ENCODE measurements at regions of chr4 and their contacts with region 1.

Region 1: DNA sequence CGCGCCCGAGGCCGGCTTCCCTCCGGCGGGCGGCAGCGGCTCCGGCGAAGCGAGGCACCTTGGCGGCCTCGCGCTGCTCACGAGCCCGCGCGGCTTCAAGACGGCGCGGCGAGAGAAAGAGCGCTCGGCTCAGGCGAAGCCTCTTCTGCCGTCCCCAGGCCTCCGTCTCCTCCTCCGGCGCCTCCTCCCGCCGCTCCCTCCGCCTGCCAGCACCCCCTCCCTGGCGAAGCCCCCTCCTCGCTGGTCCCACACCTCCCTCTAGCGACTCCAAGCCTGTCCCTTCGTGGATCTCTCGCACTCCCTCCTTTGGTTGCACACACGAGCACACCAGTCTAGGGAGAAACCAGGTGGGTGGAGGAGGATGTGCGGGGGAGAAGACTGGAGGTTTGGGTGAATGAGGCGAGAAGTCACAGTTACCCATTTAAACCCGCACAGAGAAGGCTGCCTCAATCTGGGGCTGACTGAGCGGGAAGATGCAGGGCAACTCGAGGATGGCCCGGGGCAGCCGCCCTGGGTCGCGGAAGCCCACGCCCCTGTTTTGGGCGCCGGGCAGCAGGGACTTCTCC is at the start of gene CAMK2D:
- DNase-seq: peak; percentile 76
- ATAC-seq: peak; percentile 36
- H3K4me3 Mint-ChIP-seq: peak within 1 kb of the TSS; percentile 99
- H3K27ac Mint-ChIP-seq: peak within 1 kb of the TSS; percentile 100
- H3K4me1 Mint-ChIP-seq: peaks cover 42% of the 10 kb centered on the region
- H3K27me3 Mint-ChIP-seq: no peaks in the 10 kb centered on the region
- CTCF ChIP-seq: no peak
- total RNA-seq, gene CAMK2D: 62.7 and 72.9 TPM in 2 replicates

Region 2: GRCh38 chr4:112231779-112232713 is 1529.7 kb before region 1 on chr4 and contains the start of gene AP1AR:
- CTCF ChIA-PET with region 1: no interaction called
- POLR2A ChIA-PET with region 1: no interaction called
- intact Hi-C with region 1: loop called (anchors 5 kb)
- DNase-seq: peak; percentile 91
- ATAC-seq: peak; percentile 73
- H3K4me3 Mint-ChIP-seq: peak within 1 kb of the TSS; percentile 100
- H3K27ac Mint-ChIP-seq: peak within 1 kb of the TSS; percentile 99
- H3K4me1 Mint-ChIP-seq: peaks cover 30% of the 10 kb centered on the region
- H3K27me3 Mint-ChIP-seq: peaks cover 1% of the 10 kb centered on the region
- CTCF ChIP-seq: no peak
- total RNA-seq, gene AP1AR: 20.1 and 24.3 TPM in 2 replicates

Region 3: DNA sequence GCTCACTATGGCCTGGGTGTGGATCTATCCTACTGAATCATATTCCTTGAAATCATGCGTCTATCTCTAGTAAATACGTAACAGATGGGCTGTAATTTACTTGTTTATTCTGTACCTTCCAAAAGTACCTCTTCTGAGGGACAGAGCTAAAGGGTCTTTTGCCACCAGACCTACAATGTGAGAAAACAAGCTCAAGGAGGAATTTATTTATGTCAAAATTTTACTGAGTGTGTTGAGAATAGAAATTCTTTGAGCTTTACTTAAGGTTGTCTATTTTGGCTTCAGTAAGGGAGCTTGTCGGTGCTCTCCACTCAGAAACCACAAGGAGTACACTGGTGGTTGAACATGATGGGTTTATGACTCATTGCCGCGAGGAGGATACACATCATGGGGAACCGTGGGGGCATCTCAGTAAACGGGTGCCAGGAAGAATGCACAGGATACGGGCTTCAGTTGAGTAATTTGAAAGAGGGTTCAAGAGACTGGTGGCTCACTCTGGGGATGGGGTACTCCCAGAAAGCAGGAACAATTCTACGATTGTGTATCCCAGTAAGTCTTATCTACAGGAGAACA is 709.2 kb before region 1 on chr4:
- CTCF ChIA-PET with region 1: no interaction called
- POLR2A ChIA-PET with region 1: no interaction called
- intact Hi-C with region 1: no loop called
- DNase-seq: no peak
- ATAC-seq: peak; percentile 21
- H3K4me3 Mint-ChIP-seq: no peak overlapping the region
- H3K27ac Mint-ChIP-seq: no peak overlapping the region
- H3K4me1 Mint-ChIP-seq: no peaks in the 10 kb centered on the region
- H3K27me3 Mint-ChIP-seq: peaks cover 2% of the 10 kb centered on the region
- CTCF ChIP-seq: no peak

Region 4: GRCh38 chr4:113394730-113395530 is 366.8 kb before region 1 on chr4:
- CTCF ChIA-PET with region 1: interaction called, 3 read pairs
- POLR2A ChIA-PET with region 1: no interaction called
- intact Hi-C with region 1: loop called (anchors 2 kb)
- DNase-seq: no peak
- ATAC-seq: peak; percentile 89
- H3K4me3 Mint-ChIP-seq: no peak overlapping the region
- H3K27ac Mint-ChIP-seq: no peak overlapping the region
- H3K4me1 Mint-ChIP-seq: no peaks in the 10 kb centered on the region
- H3K27me3 Mint-ChIP-seq: peaks cover 2% of the 10 kb centered on the region
- CTCF ChIP-seq: peak; percentile 24

Region 5: GRCh38 chr4:113618205-113618604 is 143.5 kb before region 1 on chr4:
- CTCF ChIA-PET with region 1: no interaction called
- POLR2A ChIA-PET with region 1: interaction called, 4 read pairs
- intact Hi-C with region 1: loop called (anchors 1 kb)
- DNase-seq: no peak
- ATAC-seq: peak; percentile 83
- H3K4me3 Mint-ChIP-seq: no peak overlapping the region
- H3K27ac Mint-ChIP-seq: no peak overlapping the region
- H3K4me1 Mint-ChIP-seq: peaks cover 48% of the 10 kb centered on the region
- H3K27me3 Mint-ChIP-seq: no peaks in the 10 kb centered on the region
- CTCF ChIP-seq: no peak

Region 6: DNA sequence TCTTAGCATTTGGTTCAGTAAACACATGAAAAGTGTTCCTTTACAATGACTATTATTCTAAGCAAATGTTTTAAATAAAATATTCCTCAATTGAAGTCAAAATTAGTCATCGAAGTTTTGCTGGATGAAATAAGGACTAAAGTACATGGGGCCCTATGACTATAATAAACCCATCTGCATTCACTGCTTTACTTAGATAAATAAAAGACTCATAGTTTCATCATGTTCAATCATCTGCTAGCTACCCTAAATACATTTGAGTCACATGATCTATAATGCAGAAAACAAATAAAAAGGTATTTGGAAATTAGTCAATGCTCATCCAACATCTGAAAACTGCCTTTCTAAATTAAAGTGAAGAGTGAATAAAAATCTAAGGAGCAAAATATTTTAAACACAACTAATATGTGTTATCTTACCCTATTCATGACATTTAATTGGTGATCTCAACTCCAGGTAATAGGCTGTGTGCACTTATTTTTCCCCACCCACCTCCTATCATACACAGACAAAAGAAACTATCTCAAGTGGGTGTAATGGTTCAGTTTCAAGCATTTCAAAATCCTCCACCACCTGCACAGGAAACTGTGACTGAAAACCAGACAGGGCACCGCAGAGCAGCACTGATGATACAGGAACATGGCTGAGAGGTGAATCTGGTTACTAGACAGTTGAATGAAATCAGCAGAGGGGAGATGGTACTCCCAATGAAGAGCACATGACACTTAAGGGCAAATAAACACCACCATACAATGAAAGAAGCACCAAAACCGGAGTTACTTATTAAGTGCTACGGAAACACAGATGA is 78.8 kb before region 1 on chr4:
- CTCF ChIA-PET with region 1: no interaction called
- POLR2A ChIA-PET with region 1: interaction called, 3 read pairs
- intact Hi-C with region 1: loop called (anchors 1 kb)
- DNase-seq: peak; percentile 33
- ATAC-seq: peak; percentile 93
- H3K4me3 Mint-ChIP-seq: peak overlapping the region; percentile 13
- H3K27ac Mint-ChIP-seq: peak overlapping the region; percentile 70
- H3K4me1 Mint-ChIP-seq: peaks cover 53% of the 10 kb centered on the region
- H3K27me3 Mint-ChIP-seq: no peaks in the 10 kb centered on the region
- CTCF ChIP-seq: no peak

Region 7: DNA sequence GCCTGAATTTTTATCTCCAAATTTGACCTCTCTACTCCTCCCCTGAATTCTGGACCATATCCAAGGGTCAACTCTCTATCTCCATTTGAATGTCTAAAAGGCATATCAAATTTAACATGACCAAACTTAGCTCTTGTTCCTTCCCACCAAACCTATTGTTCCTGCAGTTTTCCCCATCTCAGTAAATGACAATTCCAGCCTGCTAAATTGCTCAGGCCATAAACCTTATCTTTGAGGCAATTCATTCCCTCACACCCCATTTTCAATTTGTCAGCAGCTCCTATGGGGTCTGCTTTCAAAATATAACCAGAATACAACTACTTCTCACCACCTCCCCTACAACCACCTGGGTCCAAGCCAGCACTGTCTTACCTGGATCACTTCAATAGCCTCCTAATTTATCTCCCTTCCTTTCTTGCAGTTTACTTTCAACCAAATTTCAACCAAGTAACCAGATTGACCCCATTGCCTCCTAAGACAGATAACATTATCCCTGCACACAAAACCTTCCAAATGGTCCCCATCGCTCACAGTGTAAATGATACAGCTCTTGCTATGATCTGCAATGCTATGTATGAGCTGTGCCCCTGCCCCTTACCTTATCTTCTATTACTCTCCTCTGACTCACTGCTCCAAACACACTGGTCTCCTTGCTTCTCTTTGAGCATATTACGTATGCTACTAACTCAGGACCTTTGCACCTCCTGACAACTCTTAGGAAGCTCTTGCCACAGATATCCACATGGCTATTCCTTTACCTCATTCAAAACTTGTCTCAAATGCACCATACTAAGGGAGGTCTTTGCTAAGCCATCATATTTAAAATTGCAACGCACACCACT is 66.2 kb before region 1 on chr4:
- CTCF ChIA-PET with region 1: no interaction called
- POLR2A ChIA-PET with region 1: no interaction called
- intact Hi-C with region 1: no loop called
- DNase-seq: no peak
- ATAC-seq: no peak
- H3K4me3 Mint-ChIP-seq: no peak overlapping the region
- H3K27ac Mint-ChIP-seq: no peak overlapping the region
- H3K4me1 Mint-ChIP-seq: peaks cover 38% of the 10 kb centered on the region
- H3K27me3 Mint-ChIP-seq: no peaks in the 10 kb centered on the region
- CTCF ChIP-seq: no peak

Region 8: GRCh38 chr4:113869743-113870375 is 108.2 kb after region 1 on chr4:
- CTCF ChIA-PET with region 1: no interaction called
- POLR2A ChIA-PET with region 1: no interaction called
- intact Hi-C with region 1: loop called (anchors 1 kb)
- DNase-seq: peak; percentile 40
- ATAC-seq: peak; percentile 94
- H3K4me3 Mint-ChIP-seq: peak overlapping the region; percentile 63
- H3K27ac Mint-ChIP-seq: peak overlapping the region; percentile 90
- H3K4me1 Mint-ChIP-seq: peaks cover 19% of the 10 kb centered on the region
- H3K27me3 Mint-ChIP-seq: no peaks in the 10 kb centered on the region
- CTCF ChIP-seq: no peak

Region 9: DNA sequence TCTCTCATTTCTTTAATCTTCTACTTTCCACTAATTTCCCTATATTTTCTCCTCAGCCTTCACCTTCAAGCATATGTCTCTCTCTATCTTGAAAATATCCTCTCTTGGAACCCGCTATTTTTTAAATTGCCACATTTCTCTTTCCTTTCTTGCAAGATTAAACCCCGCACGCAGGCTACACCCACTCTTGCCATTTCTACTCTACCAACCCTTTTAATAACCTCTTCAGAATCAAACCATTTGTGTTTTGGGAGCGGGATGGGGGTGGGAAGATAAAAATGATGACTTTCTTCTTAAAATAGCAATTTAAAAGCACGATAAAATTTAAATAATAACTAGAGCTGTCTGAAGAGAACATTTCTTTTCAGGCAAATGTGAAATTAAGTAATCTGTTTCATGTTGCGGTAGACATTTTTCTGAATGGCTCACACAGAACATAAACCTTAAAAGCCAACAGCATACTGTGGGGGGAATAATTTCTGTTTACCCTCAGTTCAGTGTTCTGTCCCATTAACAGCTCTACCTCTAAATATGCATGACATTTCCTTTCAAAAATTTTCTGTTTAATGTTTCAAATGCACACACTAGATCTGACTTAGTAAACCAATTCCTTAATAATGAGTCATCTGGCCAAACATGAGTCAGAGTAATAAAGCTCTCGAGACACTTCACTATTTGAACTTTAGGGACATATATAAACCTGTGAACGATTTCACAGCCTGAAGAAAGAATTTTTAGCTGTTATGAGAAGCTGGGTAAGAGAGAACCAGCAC is 197.2 kb after region 1 on chr4:
- CTCF ChIA-PET with region 1: no interaction called
- POLR2A ChIA-PET with region 1: no interaction called
- intact Hi-C with region 1: no loop called
- DNase-seq: no peak
- ATAC-seq: no peak
- H3K4me3 Mint-ChIP-seq: no peak overlapping the region
- H3K27ac Mint-ChIP-seq: no peak overlapping the region
- H3K4me1 Mint-ChIP-seq: no peaks in the 10 kb centered on the region
- H3K27me3 Mint-ChIP-seq: peaks cover 26% of the 10 kb centered on the region
- CTCF ChIP-seq: no peak